Activated CD8-positive, alpha-beta T cell treated with anti-CD3 and anti-CD28 coated beads for 36 hours (primary cell): ENCODE measurements at regions of chr4 and their contacts with region 1.

Region 1: DNA sequence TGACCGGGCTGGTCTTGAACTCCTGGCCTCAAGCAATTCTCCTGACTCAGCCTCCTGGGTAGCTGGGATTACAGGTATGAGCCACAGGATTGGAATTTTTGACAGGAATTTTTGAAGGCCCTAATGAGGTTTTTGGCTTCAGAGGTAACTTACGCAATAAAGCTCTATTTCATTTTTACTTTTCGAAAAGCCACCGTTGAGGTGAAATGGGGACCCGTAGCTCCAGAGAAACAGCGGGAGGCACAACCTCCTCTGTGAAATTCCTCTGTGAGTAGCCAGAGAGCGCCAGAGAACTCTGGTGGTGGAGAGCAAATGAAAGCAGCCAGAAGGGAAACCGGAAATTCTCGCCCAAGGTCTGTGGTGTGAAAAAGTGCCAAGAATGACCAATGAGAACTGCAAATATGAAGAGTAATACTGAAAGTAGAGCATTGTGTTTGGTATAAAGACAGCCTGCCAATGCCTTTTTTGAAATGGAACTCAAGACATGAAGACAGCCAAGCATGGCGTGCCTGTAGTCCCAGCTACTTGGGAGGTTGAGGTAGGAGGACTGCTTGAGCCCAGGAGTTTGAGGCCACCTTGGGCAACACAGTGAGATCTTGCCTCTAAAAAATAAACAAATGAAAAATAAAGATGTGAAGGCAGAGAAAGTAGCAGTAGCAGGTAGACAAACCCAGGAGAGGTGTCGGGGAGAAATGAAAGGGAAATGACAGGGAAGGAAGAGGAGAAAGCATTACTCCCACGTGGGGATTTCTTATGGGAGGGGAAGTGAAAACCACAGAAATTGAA is 33.0 kb upstream of the TMEM131L start:
- DNase-seq: peak; percentile 91
- ATAC-seq: peak; percentile 86
- H3K4me3 Mint-ChIP-seq: peak overlapping the region; percentile 80
- H3K27ac Mint-ChIP-seq: peak overlapping the region; percentile 97
- H3K4me1 Mint-ChIP-seq: peaks cover 72% of the 10 kb centered on the region
- H3K27me3 Mint-ChIP-seq: no peaks in the 10 kb centered on the region
- CTCF ChIP-seq: peak; percentile 82

Region 2: DNA sequence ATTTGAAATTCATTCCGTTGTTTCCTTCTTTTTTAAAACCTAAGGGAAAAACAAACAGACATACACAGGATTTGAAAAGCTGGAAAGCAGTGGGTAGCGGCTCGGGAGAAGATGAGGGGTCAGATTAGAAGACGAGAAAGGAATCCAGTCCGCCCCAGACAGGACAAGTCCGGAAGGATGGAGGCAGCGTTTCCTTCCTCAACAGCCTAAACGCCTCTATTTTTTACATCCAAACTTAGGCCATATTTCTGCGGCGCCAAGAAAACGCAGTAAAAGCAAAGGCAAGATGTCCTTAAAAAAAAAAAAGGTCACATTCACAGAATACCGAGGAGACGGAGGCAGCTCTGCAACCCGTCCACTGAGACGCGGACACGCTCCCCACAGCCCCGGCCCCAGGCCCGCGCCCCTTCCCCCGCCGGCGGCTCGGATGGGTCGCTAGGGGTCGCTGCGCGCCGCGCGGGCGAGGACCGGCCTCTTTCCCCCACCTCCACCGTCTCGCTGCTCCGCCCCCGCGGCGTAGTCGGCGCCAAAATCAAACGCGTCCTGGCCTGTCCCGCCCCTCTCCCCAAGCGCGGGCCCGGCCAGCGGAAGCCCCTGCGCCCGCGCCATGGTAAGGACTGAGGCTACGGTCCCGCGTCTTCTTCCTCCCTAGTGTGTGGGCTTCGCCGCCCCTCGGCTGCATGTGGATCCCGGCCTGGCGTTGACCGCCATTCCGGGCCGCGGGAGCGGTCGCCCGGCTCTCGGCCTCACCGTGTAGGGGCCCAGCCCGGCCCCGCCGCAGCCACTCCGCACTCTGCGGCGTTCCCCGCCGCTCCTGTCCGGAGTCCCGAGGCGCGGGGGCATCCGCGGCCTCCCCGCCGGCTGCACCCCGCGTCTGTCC is 88.8 kb before region 1 on chr4 and contains the start of gene MND1:
- CTCF ChIA-PET with region 1: interaction called, 9 read pairs
- POLR2A ChIA-PET with region 1: interaction called, 4 read pairs
- intact Hi-C with region 1: loop called (anchors 5 kb)
- DNase-seq: peak; percentile 94
- ATAC-seq: peak; percentile 94
- H3K4me3 Mint-ChIP-seq: peak within 1 kb of the TSS; percentile 93
- H3K27ac Mint-ChIP-seq: peak within 1 kb of the TSS; percentile 87
- H3K4me1 Mint-ChIP-seq: peaks cover 24% of the 10 kb centered on the region
- H3K27me3 Mint-ChIP-seq: peaks cover 12% of the 10 kb centered on the region
- CTCF ChIP-seq: peak; percentile 100
- total RNA-seq, gene MND1: 48.0 to 50.0 TPM